AG04450 (cell line): ENCODE measurements at regions of chr6 and their contacts with region 1.

Region 1: DNA sequence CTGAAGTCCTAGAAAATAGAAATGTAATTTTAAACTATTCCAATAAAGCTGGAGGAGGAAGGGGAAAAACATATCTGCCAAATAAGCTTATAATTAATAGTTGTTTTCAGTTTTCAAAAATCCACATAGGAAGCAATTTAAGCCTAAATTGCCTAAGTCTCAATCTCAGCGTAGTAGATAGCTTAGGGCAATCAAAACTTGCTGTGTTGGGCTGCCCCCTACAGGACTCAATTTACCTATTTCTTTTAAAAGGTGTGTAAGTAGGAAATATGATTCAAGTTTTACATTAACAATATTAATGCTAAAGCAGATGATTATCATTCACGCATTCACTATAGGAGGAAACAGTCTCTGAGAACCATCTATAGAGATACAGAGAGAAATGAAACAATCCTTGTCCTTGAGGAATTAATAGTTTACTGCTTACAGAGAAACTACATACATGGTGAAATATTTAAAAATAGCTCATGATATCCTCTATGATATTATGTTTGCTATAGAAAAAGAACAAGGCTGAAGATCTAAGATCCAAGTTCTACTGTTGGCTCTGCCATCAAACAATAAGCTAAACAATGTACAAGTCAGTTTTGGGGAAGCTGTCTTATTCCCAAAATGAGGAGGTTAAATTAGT is 102.1 kb downstream of the ATG5 start:
- DNase-seq: peak; percentile 54
- H3K4me3 ChIP-seq: no peak overlapping the region
- H3K27ac ChIP-seq: no peak overlapping the region
- H3K27me3 ChIP-seq: no peaks in the 10 kb centered on the region
- CTCF ChIP-seq: peak; percentile 69

Region 2: GRCh38 chr6:105509506-105510331 is 713.7 kb before region 1 on chr6:
- CTCF ChIA-PET with region 1: interaction called, 10 read pairs
- POLR2A ChIA-PET with region 1: no interaction called
- DNase-seq: no peak
- H3K4me3 ChIP-seq: no peak overlapping the region
- H3K27ac ChIP-seq: no peak overlapping the region
- H3K27me3 ChIP-seq: no peaks in the 10 kb centered on the region
- CTCF ChIP-seq: peak; percentile 64

Region 3: DNA sequence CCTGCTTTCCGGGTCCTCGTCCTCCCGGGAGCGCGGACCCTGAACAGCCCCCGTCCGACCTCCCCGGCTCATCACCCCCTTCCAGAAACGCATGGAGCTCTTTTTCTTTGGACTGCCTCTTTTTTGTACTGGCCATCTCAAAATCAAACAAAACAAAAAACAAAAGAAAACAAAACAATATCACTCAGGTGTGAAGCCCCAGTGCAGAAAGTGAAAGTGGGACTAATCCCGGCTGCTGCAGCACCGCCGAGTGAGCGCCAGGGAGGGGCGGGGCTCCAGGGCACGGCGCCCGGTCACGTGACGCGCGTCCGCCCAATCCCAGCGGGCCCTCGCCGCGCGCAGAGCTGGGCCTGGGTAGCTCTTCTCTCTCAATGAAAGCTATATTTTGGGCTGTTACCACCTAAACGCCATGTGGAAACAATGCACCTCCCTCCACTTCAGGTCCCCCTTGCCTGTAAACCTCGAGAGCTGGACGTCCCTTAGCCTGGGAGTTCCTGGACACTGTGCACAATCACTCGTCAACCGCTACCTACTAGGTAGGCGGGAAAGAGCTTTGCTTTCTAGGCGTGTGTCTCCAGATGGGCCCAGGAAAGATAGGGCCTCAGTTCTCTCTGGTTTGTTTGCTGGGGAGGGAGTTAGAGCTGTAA is 231.0 kb before region 1 on chr6:
- CTCF ChIA-PET with region 1: interaction called, 42 read pairs
- POLR2A ChIA-PET with region 1: no interaction called
- DNase-seq: no peak
- H3K4me3 ChIP-seq: peak overlapping the region; percentile 75
- H3K27ac ChIP-seq: no peak overlapping the region
- H3K27me3 ChIP-seq: no peaks in the 10 kb centered on the region
- CTCF ChIP-seq: no peak

Region 4: GRCh38 chr6:106163446-106163965 is 59.9 kb before region 1 on chr6:
- CTCF ChIA-PET with region 1: interaction called, 14 read pairs
- POLR2A ChIA-PET with region 1: no interaction called
- DNase-seq: peak; percentile 58
- H3K4me3 ChIP-seq: peak overlapping the region; percentile 27
- H3K27ac ChIP-seq: peak overlapping the region; percentile 90
- H3K27me3 ChIP-seq: no peaks in the 10 kb centered on the region
- CTCF ChIP-seq: peak; percentile 17; the same call in 1 of the 2 replicates

Region 5: DNA sequence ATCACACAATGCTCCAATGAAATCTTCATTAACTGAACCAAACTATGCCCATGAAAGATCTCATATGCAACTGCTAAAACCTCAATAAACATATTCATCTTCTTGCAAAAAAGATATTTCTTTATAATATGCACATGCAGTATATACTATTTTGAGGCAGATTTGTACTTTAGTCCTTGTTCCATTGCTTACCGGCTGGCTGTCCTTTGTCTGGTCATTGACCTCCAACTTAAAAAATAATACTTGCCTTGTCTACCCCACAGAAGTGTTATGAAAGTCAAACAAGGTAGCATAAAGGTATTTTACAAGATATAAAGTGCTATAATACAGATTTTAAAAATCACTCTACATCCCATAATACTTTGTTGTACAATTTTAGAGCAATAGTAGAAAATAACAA is 13.9 kb after region 1 on chr6:
- CTCF ChIA-PET with region 1: interaction called, 13 read pairs
- POLR2A ChIA-PET with region 1: no interaction called
- DNase-seq: no peak
- H3K4me3 ChIP-seq: no peak overlapping the region
- H3K27ac ChIP-seq: no peak overlapping the region
- H3K27me3 ChIP-seq: no peaks in the 10 kb centered on the region
- CTCF ChIP-seq: no peak

Region 6: DNA sequence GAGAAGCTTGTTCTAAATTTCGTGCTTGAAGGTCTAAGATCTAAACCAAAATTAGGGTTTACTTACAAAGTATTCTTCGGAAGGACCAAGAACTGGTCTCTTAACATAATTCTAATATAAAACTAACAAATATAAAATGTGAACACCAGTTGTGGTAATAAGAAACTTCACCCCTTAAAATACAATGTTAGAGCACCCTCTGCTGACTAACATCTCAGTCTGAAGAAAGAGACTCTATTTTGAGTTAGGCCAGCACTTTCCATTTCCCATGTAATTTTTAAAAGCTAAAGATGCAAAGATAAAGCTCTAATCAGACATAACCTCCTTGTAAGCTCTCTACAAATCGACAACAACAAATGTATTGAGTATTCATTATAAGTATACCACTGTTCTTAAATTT is 77.5 kb after region 1 on chr6:
- CTCF ChIA-PET with region 1: interaction called, 26 read pairs
- POLR2A ChIA-PET with region 1: no interaction called
- DNase-seq: peak; percentile 21
- H3K4me3 ChIP-seq: no peak overlapping the region
- H3K27ac ChIP-seq: no peak overlapping the region
- H3K27me3 ChIP-seq: no peaks in the 10 kb centered on the region
- CTCF ChIP-seq: peak; percentile 62

Region 7: DNA sequence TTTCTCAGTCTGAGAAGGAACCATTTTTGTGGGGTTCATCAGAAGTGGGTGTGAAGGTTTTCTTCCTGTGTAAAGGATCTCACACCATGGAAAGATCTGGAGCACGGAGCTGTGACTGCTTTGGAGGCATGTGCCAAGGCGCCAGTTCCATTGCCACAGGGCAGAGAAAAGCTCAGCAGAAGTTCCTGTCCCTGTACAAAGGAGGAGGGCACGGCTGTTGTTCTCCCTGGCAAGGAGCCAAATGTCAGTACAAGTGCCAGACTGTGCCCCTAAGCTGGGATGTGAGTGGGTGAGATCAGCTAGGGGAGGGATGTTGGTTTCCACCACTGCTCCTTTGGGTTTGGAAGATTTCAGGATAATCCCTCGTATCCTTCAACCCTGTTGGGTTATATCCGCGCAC is 254.4 kb after region 1 on chr6:
- CTCF ChIA-PET with region 1: no interaction called
- POLR2A ChIA-PET with region 1: no interaction called
- DNase-seq: no peak
- H3K4me3 ChIP-seq: no peak overlapping the region
- H3K27ac ChIP-seq: no peak overlapping the region
- H3K27me3 ChIP-seq: peaks cover 4% of the 10 kb centered on the region
- CTCF ChIP-seq: no peak